PC-9 (cell line): ENCODE measurements at regions of chr10 and their contacts with region 1.

Region 1: GRCh38 chr10:30324448-30325110 is 24.5 kb downstream of the MTPAP start:
- DNase-seq: no peak
- H3K4me3 ChIP-seq: no peak overlapping the region
- H3K27ac ChIP-seq: no peak overlapping the region
- H3K4me1 ChIP-seq: no peaks in the 10 kb centered on the region
- H3K27me3 ChIP-seq: no peaks in the 10 kb centered on the region
- CTCF ChIP-seq: no peak

Region 2: DNA sequence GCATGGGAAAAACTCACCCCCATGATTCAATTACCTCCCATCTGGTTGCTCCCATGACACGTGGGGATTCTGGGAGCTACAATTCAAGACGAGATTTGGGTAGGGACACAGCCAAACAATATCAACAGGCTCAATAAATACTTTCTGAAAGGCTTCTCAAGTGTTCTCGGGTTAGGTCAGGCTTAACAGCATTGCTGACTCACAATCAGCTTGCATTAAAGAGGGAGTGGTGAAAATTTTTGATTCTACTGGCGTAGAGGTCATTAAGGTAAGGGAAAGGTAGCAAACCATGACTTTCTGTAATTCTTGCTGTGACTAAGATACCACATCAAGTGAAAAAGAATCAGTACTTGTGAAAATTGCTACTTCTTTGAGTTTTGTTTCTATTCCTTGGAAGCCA is 391.6 kb before region 1 on chr10:
- CTCF ChIA-PET with region 1: no interaction called
- POLR2A ChIA-PET with region 1: no interaction called
- intact Hi-C with region 1: no loop called
- DNase-seq: peak in 1 of 2 experiments; percentile 58
- H3K4me3 ChIP-seq: no peak overlapping the region
- H3K27ac ChIP-seq: peak overlapping the region; percentile 56
- H3K4me1 ChIP-seq: 0 out of 2 replicates have a peak, but pooled peaks cover 5% of the 10 kb centered on the region
- H3K27me3 ChIP-seq: no peaks in the 10 kb centered on the region
- CTCF ChIP-seq: no peak

Region 3: DNA sequence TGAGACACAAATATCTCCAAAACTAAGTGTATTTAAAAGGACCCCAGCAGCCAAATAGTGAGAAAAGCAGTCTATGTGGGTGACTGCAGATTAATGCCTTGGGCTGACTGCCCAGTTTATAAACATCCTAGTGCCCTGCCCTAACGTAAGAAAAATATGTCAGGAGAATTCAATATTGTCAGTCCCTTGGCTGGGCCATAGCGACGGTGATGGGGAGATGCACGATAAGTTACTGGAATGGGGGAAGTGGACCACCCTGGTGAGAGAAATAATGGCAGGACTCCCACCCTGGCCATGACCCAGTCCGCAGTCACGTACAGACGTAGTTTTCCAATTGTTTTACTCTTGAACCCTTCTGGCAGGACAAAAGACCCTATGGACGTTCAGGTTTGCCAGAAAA is 313.2 kb before region 1 on chr10:
- CTCF ChIA-PET with region 1: interaction called, 14 read pairs
- POLR2A ChIA-PET with region 1: no interaction called
- intact Hi-C with region 1: no loop called
- DNase-seq: no peak
- H3K4me3 ChIP-seq: no peak overlapping the region
- H3K27ac ChIP-seq: no peak overlapping the region
- H3K4me1 ChIP-seq: no peaks in the 10 kb centered on the region
- H3K27me3 ChIP-seq: no peaks in the 10 kb centered on the region
- CTCF ChIP-seq: no peak

Region 4: GRCh38 chr10:30231071-30231652 is 93.4 kb before region 1 on chr10:
- CTCF ChIA-PET with region 1: no interaction called
- POLR2A ChIA-PET with region 1: no interaction called
- intact Hi-C with region 1: no loop called
- DNase-seq: peak; percentile 38 to 79
- H3K4me3 ChIP-seq: no peak overlapping the region
- H3K27ac ChIP-seq: no peak overlapping the region
- H3K4me1 ChIP-seq: peaks cover 11% of the 10 kb centered on the region
- H3K27me3 ChIP-seq: no peaks in the 10 kb centered on the region
- CTCF ChIP-seq: no peak

Region 5: GRCh38 chr10:30309401-30309800 is 15.2 kb before region 1 on chr10:
- CTCF ChIA-PET with region 1: no interaction called
- POLR2A ChIA-PET with region 1: interaction called, 26 read pairs
- intact Hi-C with region 1: no loop called
- DNase-seq: no peak
- H3K4me3 ChIP-seq: no peak overlapping the region
- H3K27ac ChIP-seq: no peak overlapping the region
- H3K4me1 ChIP-seq: no peaks in the 10 kb centered on the region
- H3K27me3 ChIP-seq: no peaks in the 10 kb centered on the region
- CTCF ChIP-seq: no peak